ENCODE measurements at regions of chr3 and their contacts with region 1.

Region 1: DNA sequence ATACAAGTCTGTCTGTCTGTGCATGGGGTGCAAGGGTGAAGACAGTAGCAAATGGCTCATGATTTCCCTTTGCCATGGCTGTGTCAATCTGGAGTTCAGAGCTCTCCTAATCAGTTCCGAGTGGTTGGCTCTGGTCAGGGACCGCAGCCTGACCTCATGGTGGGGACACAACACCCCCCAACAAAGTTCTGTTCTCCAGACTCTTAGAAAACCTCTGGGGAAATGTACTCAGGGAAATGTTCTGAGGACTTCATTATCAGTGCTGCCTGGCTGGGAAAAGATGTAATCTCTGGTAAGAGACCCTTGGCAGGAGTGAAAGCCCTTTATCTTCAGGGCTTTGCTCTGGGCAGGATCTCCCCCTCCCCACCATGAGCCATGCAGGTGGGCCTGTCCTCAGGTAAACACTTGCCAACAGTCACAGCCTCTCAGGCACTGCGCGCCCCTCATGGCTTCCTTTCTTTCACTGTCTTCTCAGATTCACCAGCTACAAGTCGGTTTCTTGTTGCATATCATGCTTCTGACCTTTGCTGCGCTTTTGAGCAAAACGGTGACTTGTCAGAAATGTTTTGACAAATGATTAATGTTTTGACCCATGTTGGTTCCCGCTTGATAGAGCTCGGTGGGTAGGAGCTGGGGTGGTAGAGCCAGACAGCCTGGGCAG is 95.5 kb downstream of the ST6GAL1 start:
- DNase-seq: peak in 2 of 4 experiments; percentile 37 to 57
- ATAC-seq: peak; percentile 33
- H3K4me3 ChIP-seq: no peak overlapping the region
- H3K27ac ChIP-seq: peak overlapping the region; percentile 58; the same call in 1 of the 3 replicates
- H3K4me1 ChIP-seq: peaks cover 33 to 57% of the 10 kb centered on the region in 2 experiments
- H3K27me3 ChIP-seq: no peaks in the 10 kb centered on the region
- CTCF ChIP-seq: no peak
- EP300 ChIP-seq: no peak
- POLR2A ChIP-seq: no peak
- RAD21 ChIP-seq: no peak

Region 2: GRCh38 chr3:186705882-186706780 is 319.7 kb before region 1 on chr3:
- CTCF ChIA-PET with region 1: no interaction called
- POLR2A ChIA-PET with region 1: no interaction called
- in situ Hi-C with region 1: no loop called
- intact Hi-C with region 1: no loop called
- DNase-seq: no peak
- ATAC-seq: no peak
- H3K4me3 ChIP-seq: no peak overlapping the region
- H3K27ac ChIP-seq: no peak overlapping the region
- H3K4me1 ChIP-seq: peaks cover 0 to 3% of the 10 kb centered on the region in 2 experiments; a peak in 1 of 5 replicates
- H3K27me3 ChIP-seq: peaks cover 2 to 9% of the 10 kb centered on the region in 2 experiments; a peak in 2 of 5 replicates
- CTCF ChIP-seq: no peak
- EP300 ChIP-seq: no peak
- POLR2A ChIP-seq: no peak
- RAD21 ChIP-seq: no peak

Region 3: GRCh38 chr3:186953011-186953487 is 72.7 kb before region 1 on chr3:
- CTCF ChIA-PET with region 1: no interaction called
- POLR2A ChIA-PET with region 1: interaction called, 3 read pairs
- in situ Hi-C with region 1: no loop called
- intact Hi-C with region 1: loop called (anchors 5 kb)
- DNase-seq: peak in 2 of 4 experiments; percentile 52 to 72
- ATAC-seq: peak; percentile 42
- H3K4me3 ChIP-seq: no peak overlapping the region
- H3K27ac ChIP-seq: peak overlapping the region; percentile 75
- H3K4me1 ChIP-seq: peaks cover 49 to 59% of the 10 kb centered on the region in 2 experiments
- H3K27me3 ChIP-seq: no peaks in the 10 kb centered on the region
- CTCF ChIP-seq: no peak
- EP300 ChIP-seq: peak; percentile 35; the same call in 1 of the 2 replicates
- POLR2A ChIP-seq: no peak; the same call in 1 of the 2 replicates
- RAD21 ChIP-seq: peak in 1 of 2 experiments; percentile 33; a peak in 2 of 4 replicates

Region 4: GRCh38 chr3:186985661-186986364 is 40.0 kb before region 1 on chr3:
- CTCF ChIA-PET with region 1: no interaction called
- POLR2A ChIA-PET with region 1: interaction called, 4 read pairs
- in situ Hi-C with region 1: no loop called
- intact Hi-C with region 1: loop called (anchors 5 kb)
- DNase-seq: peak in 1 of 4 experiments; percentile 30
- ATAC-seq: peak; percentile 21
- H3K4me3 ChIP-seq: no peak overlapping the region
- H3K27ac ChIP-seq: peak overlapping the region; percentile 12; the same call in 1 of the 3 replicates
- H3K4me1 ChIP-seq: peaks cover 12 to 30% of the 10 kb centered on the region in 2 experiments
- H3K27me3 ChIP-seq: no peaks in the 10 kb centered on the region
- CTCF ChIP-seq: no peak
- EP300 ChIP-seq: no peak
- POLR2A ChIP-seq: no peak
- RAD21 ChIP-seq: no peak

Region 5: DNA sequence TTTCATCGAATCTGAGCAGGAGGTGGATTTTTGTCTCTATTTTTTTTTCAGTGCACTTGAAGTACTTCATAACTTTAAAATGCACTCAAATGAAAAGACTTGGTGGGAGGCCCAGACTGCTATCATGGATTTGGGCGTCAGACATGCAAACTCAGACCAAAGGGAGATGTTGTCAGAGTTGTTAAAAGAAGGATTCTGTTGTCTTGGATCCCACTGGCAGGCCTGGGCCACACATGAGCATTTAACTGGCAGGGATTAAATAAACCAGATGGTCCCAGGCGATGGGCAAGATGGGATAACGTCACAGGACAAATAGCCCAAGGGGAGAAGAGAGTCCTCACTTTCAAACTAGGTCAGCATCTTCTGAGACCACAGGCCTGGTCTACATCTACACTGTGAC is 186.9 kb after region 1 on chr3:
- CTCF ChIA-PET with region 1: no interaction called
- POLR2A ChIA-PET with region 1: no interaction called
- in situ Hi-C with region 1: no loop called
- intact Hi-C with region 1: no loop called
- DNase-seq: no peak
- ATAC-seq: no peak
- H3K4me3 ChIP-seq: no peak overlapping the region
- H3K27ac ChIP-seq: no peak overlapping the region
- H3K4me1 ChIP-seq: peaks cover 0 to 7% of the 10 kb centered on the region in 2 experiments; a peak in 2 of 5 replicates
- H3K27me3 ChIP-seq: peaks cover 9 to 13% of the 10 kb centered on the region in 2 experiments; a peak in 3 of 5 replicates
- CTCF ChIP-seq: no peak
- EP300 ChIP-seq: no peak
- POLR2A ChIP-seq: no peak
- RAD21 ChIP-seq: no peak

Region 6: DNA sequence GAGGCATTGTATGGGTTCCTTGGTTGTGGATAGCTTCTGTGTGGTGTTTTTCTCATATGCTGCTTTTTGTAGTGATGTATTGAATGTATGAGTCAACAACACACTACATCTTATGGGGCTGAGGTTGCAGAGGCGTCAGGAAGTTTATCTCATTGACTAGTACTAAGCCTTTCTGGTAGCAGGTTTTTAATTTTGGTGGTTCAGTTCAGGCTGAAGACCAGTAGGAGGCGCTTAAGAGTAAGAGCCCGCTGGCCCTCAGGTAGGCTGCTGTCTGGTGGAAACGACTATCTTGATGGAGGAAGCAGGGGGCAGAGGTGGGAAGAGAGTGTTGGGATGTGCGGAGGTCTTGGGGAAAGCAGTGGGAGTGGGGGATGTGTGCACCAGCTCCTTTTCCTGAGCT is 404.8 kb after region 1 on chr3:
- CTCF ChIA-PET with region 1: no interaction called
- POLR2A ChIA-PET with region 1: no interaction called
- in situ Hi-C with region 1: no loop called
- intact Hi-C with region 1: no loop called
- DNase-seq: peak; percentile 14 to 21 (median 18)
- ATAC-seq: peak; percentile 75
- H3K4me3 ChIP-seq: no peak overlapping the region
- H3K27ac ChIP-seq: no peak overlapping the region
- H3K4me1 ChIP-seq: no peaks in the 10 kb centered on the region
- H3K27me3 ChIP-seq: no peaks in the 10 kb centered on the region; a peak in 1 of 5 replicates
- CTCF ChIP-seq: peak; percentile 51 to 72 (median 63)
- EP300 ChIP-seq: no peak
- POLR2A ChIP-seq: no peak
- RAD21 ChIP-seq: peak; percentile 53 to 69

Measured in K562 (cell line).